Lower leg skin (tissue), 4 donors: ENCODE measurements at regions of chr6 and their contacts with region 1.

Region 1: DNA sequence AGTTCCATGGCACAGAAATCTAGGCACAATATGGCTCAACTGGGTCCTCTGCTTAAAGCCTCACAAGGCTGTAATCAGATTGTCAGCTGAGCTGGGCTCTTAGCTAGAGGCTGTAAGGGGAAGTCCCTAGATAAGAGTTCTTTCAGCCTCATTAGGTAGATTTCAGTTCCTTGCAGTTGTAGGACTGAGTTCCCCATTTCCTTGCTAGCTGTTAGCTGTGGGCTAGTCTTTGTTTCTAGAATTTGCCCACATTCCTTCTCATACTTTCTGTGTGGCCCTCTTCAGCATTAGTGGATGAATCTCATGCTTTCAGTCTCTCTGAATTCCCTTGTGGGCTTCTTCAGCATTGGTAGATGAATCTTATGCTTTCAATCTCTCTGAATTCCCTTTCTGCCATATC is 71.0 kb upstream of the MRAP2 start:
- DNase-seq: no peak
- H3K4me3 ChIP-seq: no peak overlapping the region
- CTCF ChIP-seq: no peak
- POLR2A ChIP-seq: no peak

Region 2: GRCh38 chr6:84017709-84018452 is 55.3 kb after region 1 on chr6:
- intact Hi-C with region 1: loop called (anchors 2 kb)
- DNase-seq: no peak
- H3K4me3 ChIP-seq: no peak overlapping the region
- CTCF ChIP-seq: no peak
- POLR2A ChIP-seq: no peak